ENCODE measurements at regions of chr19 and their contacts with region 1.

Region 1: DNA sequence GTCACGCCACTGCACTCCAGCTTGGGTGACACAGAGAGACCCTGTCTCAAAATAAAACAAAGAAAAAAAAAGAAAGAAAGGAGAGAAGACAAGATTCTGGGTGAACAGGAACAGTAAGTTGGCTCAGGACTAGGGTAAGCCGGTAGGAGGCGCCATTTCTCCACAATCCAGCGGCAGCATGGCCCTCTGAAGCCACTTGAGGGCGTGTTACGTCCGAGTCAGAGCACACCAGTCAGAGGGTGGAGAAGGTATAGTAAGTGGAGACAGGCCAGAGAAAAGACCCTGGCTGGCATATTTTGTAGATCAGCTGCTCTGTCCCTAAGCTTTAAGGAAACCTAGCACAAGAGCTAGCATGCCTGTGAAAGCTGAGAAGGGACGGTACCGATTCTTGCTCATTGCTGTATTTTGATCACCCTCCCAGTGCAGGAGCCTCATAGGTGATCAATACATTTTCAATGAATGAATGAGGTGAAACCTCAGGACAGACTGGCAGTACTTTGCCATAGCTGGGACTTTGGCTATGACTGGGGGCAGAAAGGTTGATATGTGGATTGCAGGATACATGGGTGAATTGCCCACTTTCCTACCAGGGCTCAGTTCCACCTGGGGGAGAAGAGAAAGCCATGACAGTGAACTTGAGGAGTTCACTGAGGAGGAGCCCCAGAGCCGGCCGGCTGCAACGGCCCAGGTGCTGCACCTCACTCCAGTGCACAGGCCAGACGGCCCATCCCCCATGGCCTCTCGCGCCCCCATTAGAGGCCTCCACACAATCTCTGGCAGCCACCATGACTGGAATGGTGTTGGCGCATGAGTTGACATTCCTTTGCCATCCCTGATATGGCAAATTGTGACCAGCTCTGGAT is 23.5 kb downstream of the POU2F2 start:
- DNase-seq: peak; percentile 95 to 98
- ATAC-seq: peak; percentile 81 to 91
- H3K4me3 ChIP-seq: no peak overlapping the region
- H3K27ac ChIP-seq: peak overlapping the region in 1 of 2 experiments; percentile 11; a peak in 1 of 6 replicates
- H3K4me1 ChIP-seq: peaks cover 18% of the 10 kb centered on the region
- CTCF ChIP-seq: peak; percentile 100
- EP300 ChIP-seq: no peak
- POLR2A ChIP-seq: no peak
- RAD21 ChIP-seq: peak; percentile 100

Region 2: DNA sequence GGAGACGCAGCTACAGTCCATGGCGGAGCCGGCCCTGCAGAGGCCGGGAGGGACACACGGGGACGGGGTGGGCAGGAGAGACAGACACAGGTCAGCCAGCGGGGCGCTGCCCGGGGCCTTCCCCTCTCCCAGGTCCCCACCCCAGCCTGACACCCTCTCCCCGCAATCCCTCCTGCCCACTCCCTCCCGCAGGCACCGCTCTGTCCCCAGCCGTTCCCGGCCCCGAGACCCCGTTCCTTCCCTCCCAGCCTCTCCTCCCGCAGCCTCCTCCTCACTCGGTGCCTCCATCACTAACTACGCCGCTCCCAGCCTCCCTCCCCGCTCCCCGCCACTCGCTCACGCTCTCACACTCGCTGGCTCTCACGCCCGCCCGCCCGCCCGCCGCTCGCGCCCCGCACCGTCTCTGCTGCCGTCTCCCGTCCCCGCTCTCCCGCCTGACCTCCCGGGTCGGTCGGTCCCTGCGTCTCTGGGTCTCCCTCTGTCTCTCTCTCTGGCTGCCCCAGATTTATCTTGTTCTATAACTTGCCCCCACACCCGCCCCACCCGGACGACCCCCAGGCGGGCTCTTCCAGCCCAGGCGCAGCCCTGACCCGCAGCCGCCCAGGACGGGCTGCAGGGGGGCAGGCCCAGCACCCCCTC is 195.7 kb before region 1 on chr19:
- CTCF ChIA-PET with region 1: no interaction called
- POLR2A ChIA-PET with region 1: no interaction called
- DNase-seq: no peak
- ATAC-seq: peak; percentile 17 to 61; a peak in 5 of 6 replicates
- H3K4me3 ChIP-seq: no peak overlapping the region
- H3K27ac ChIP-seq: peak overlapping the region in 1 of 2 experiments; percentile 1; a peak in 1 of 6 replicates
- H3K4me1 ChIP-seq: peaks cover 17% of the 10 kb centered on the region
- CTCF ChIP-seq: no peak
- EP300 ChIP-seq: no peak
- POLR2A ChIP-seq: no peak
- RAD21 ChIP-seq: no peak

Region 3: DNA sequence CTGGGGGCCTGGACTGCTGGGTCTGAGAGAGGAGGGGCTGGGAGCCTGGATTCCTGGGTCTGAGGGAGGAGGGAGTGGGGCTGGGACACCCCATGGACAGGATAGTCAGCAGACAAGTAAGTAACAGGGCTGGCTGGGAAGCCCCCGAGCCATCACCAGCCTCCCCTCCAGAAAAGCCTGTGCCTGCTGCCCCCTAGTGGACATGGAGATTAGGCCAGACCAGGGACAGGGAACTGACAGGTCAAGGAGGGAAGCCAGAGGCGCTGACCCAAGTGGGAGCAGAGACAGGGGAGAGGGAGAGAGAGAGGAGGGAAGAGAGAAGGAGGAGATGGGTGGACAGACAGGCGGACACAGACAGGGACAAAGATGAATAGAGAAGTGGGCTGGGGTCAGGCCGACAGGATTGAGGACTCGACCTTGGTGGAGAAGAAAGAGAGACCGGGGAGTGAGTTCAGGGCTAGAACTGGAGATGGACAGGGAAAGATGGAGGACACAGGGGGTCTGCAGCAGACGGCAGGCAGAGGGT is 173.8 kb before region 1 on chr19:
- CTCF ChIA-PET with region 1: no interaction called
- POLR2A ChIA-PET with region 1: no interaction called
- DNase-seq: peak; percentile 80 to 96
- ATAC-seq: peak; percentile 48 to 88
- H3K4me3 ChIP-seq: no peak overlapping the region
- H3K27ac ChIP-seq: no peak overlapping the region
- H3K4me1 ChIP-seq: 0 out of 3 replicates have a peak, but pooled peaks cover 3% of the 10 kb centered on the region
- CTCF ChIP-seq: peak; percentile 96
- EP300 ChIP-seq: no peak
- POLR2A ChIP-seq: no peak
- RAD21 ChIP-seq: peak; percentile 77 to 90

Region 4: DNA sequence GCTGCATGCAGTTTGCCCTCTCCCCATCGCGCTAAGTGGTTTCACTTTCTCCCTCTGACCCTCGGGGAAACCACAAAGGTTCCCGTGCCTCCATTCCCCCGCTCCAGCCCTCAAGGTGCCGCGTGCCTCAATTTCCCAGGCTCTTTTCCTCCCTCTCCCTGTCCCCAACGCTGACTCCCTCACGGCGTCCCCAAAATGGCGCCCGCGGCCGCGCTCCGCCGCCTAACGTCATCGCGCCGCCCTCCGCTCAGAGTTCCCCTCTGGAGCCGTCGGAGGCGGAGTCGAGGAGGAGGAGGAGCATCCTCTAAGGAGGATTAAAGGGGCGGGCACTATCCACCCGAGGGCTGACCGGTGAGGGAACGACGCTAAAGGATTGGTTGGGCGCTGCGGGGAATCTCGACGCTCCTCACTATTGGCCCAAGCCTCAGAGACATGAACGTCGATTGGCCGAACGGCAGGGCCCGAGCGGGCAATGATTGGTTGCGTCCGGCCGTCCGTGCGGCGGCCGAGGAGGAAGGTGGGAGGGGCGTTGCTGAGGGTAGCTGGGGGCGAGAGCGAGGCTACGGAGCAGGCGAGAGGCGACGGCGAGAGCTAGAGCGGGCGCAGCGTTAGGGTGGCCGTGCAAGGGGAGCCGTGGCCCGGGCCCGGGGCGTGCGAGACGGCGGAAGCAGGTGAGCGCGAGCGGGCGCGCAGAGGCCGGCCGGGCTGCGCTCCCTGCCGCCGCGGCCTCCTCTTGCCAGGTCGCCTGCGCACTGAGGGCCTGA is 33.0 kb before region 1 on chr19 and contains the start of gene ZNF574:
- CTCF ChIA-PET with region 1: interaction called, 47 read pairs
- POLR2A ChIA-PET with region 1: no interaction called
- DNase-seq: peak; percentile 100
- ATAC-seq: peak; percentile 92 to 98
- H3K4me3 ChIP-seq: peak within 1 kb of the TSS; percentile 80
- H3K27ac ChIP-seq: peak within 1 kb of the TSS; percentile 91 to 94
- H3K4me1 ChIP-seq: peaks cover 25% of the 10 kb centered on the region
- CTCF ChIP-seq: no peak
- EP300 ChIP-seq: no peak
- POLR2A ChIP-seq: peak; percentile 98
- RAD21 ChIP-seq: no peak
- polyA plus RNA-seq, gene ZNF574: 11.3 and 16.9 TPM in 2 replicates

Region 5: DNA sequence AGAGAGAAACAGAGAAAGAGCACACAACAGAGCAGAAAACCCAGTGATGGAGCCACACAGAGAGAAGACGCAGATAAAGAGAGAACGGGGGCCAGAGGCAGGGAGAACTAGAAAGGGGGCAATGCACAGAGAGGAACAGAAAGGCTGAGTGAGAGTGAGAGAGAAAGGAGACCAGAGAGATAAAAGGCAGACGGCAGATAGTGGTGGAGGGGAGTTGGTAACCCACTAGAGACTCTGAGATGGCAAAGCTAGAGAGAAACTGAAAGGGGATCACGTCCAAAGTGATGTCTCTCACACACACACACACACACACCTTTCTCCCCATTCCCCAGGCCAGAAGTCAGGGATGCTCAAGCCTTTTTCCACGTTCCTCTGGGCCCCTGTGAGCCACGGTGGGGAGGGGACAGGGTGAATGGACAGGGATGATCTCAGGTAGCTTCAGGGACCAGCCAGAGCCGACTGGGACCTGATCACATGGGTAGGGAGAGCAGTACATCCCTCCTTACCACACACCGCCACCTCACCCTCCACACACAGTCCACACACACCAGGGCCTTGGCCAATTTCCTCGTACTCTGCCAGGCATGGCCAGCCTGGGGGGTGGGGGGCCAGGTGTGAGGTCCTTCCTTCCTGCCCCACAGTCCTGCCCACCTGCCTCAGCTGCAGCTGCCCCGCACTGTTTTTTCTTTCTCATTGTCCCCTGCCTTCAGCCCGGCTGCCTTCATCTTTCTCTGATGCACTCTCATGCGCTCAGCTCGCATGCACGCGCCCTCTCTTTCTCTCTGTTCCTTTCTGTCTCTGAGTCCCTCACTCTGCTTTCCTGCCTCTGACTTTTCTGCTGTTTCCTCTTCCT is 45.9 kb after region 1 on chr19:
- CTCF ChIA-PET with region 1: interaction called, 678 read pairs
- POLR2A ChIA-PET with region 1: no interaction called
- DNase-seq: no peak
- ATAC-seq: peak; percentile 28 to 57; a peak in 3 of 6 replicates
- H3K4me3 ChIP-seq: no peak overlapping the region
- H3K27ac ChIP-seq: no peak overlapping the region
- H3K4me1 ChIP-seq: no peaks in the 10 kb centered on the region
- CTCF ChIP-seq: no peak
- EP300 ChIP-seq: no peak
- POLR2A ChIP-seq: no peak
- RAD21 ChIP-seq: no peak

Region 6: GRCh38 chr19:42199440-42200115 is 90.8 kb after region 1 on chr19:
- CTCF ChIA-PET with region 1: interaction called, 21 read pairs
- POLR2A ChIA-PET with region 1: no interaction called
- DNase-seq: no peak
- ATAC-seq: peak in 1 of 2 experiments; percentile 35; a peak in 3 of 6 replicates
- H3K4me3 ChIP-seq: no peak overlapping the region
- H3K27ac ChIP-seq: peak overlapping the region in 1 of 2 experiments; percentile 9; a peak in 1 of 6 replicates
- H3K4me1 ChIP-seq: no peaks in the 10 kb centered on the region
- CTCF ChIP-seq: no peak
- EP300 ChIP-seq: no peak
- POLR2A ChIP-seq: no peak
- RAD21 ChIP-seq: no peak

Region 7: DNA sequence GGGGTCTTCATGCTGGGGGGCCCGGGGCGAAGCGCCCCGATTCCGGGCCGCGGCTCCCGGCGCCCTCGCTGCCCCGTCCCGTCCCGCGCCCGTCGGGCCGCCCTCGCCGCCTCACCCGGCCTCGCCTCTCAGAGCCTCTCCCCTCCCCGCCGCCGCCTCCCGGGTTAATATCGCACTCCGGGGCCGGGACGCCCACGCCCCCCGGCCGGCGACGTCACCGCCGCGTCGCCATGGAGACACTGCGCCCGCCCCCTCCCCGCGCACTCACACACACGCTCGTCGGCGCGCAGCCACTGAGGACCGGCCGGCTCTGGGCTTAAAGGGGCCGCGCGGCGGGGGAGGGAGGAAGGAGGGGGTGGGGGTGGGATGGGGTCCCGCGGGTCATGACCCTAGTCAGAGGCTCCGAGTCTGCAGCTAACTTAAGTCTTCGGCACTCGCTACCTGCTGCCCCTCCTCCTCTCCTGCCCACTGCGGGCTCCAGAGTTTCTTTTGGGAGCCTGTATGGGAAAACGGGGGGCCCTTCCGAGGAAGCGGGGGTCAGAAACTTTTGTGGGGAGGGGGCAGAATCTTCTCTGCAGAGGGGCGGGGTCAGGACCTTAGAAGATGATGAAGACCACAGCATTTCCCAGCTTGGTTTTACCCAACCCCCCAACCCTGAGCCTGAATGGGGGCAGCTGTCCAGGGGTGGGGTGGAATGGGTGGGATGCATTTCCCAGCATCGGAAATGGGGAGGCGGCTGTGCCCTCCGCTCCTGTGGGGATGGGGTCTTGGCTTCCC is 146.4 kb after region 1 on chr19 and contains the start of gene ERF:
- CTCF ChIA-PET with region 1: interaction called, 11 read pairs
- POLR2A ChIA-PET with region 1: no interaction called
- DNase-seq: peak; percentile 96 to 98
- ATAC-seq: peak; percentile 48 to 72
- H3K4me3 ChIP-seq: peak within 1 kb of the TSS; percentile 94
- H3K27ac ChIP-seq: peak within 1 kb of the TSS; percentile 94 to 96
- H3K4me1 ChIP-seq: peaks cover 46% of the 10 kb centered on the region
- CTCF ChIP-seq: no peak
- EP300 ChIP-seq: no peak; a peak in 1 of 5 replicates
- POLR2A ChIP-seq: peak; percentile 96
- RAD21 ChIP-seq: no peak
- polyA plus RNA-seq, gene ERF: 71.9 and 103 TPM in 2 replicates

Region 8: GRCh38 chr19:42378225-42379215 is 269.8 kb after region 1 on chr19:
- CTCF ChIA-PET with region 1: interaction called, 14 read pairs
- POLR2A ChIA-PET with region 1: no interaction called
- DNase-seq: no peak
- ATAC-seq: peak in 1 of 2 experiments; percentile 17; a peak in 3 of 6 replicates
- H3K4me3 ChIP-seq: no peak overlapping the region
- H3K27ac ChIP-seq: no peak overlapping the region
- H3K4me1 ChIP-seq: no peaks in the 10 kb centered on the region
- CTCF ChIP-seq: no peak
- EP300 ChIP-seq: no peak
- POLR2A ChIP-seq: no peak
- RAD21 ChIP-seq: no peak